ENCODE measurements at regions of chr2 and their contacts with region 1.

Region 1: GRCh38 chr2:165203689-165204559 is at the start of gene SCN3A:
- DNase-seq: peak; percentile 21
- H3K27ac ChIP-seq: no peak within 1 kb of the TSS
- CTCF ChIP-seq: peak; percentile 76

Region 2: GRCh38 chr2:165015052-165015642 is 188.8 kb before region 1 on chr2:
- CTCF ChIA-PET with region 1: interaction called, 12 read pairs
- POLR2A ChIA-PET with region 1: no interaction called
- DNase-seq: peak; percentile 50
- H3K27ac ChIP-seq: no peak overlapping the region
- CTCF ChIP-seq: peak; percentile 87